ENCODE measurements at regions of chr9 and their contacts with region 1.

Region 1: GRCh38 chr9:113756476-113757192 is 119.5 kb upstream of the ZNF618 start:
- DNase-seq: no peak
- H3K4me3 ChIP-seq: no peak overlapping the region
- CTCF ChIP-seq: no peak

Region 2: DNA sequence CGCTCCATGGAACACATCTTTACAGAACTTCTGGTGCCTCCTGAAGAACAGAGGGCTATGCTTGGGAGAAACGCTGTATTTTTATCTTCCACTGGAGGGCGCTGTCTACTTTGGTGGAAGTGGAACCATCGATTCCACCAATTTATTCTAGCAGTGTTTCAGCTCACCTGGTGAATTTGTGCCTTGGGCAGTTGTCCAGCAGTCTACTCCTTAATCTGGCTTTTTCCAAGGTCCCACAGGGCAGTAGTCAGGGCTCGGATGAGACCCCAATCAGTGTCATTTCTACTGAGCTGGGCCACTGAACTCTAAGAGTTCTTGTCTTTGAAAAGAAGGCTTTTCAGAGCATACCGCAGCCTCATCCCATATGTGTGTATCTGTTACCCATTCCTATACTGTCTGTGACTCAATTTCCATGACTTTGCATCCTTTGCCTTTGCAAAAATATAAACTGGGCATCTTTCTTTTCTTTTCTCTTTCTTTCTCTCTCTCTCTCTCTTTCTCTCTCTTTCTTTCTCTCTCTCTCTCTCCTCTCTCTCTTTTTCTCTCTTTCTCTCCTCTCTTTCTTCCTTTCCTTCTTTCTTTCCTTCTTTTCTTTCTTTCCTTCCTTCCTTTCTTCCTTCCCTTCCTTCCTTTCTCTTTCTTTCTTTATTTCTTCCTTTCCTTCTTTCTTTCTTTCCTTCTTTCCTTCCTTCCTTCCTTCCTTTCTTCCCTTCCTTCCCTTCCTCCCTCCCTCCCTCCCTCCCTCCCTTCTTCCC is 18.9 kb before region 1 on chr9:
- CTCF ChIA-PET with region 1: interaction called, 10 read pairs
- POLR2A ChIA-PET with region 1: no interaction called
- DNase-seq: no peak
- H3K4me3 ChIP-seq: no peak overlapping the region
- CTCF ChIP-seq: peak; percentile 74

Region 3: GRCh38 chr9:113929634-113930389 is 173.2 kb after region 1 on chr9:
- CTCF ChIA-PET with region 1: no interaction called
- POLR2A ChIA-PET with region 1: no interaction called
- DNase-seq: no peak
- H3K4me3 ChIP-seq: no peak overlapping the region
- CTCF ChIP-seq: no peak